Panc1 (cell line): ENCODE measurements at regions of chr3 and their contacts with region 1.

Region 1: DNA sequence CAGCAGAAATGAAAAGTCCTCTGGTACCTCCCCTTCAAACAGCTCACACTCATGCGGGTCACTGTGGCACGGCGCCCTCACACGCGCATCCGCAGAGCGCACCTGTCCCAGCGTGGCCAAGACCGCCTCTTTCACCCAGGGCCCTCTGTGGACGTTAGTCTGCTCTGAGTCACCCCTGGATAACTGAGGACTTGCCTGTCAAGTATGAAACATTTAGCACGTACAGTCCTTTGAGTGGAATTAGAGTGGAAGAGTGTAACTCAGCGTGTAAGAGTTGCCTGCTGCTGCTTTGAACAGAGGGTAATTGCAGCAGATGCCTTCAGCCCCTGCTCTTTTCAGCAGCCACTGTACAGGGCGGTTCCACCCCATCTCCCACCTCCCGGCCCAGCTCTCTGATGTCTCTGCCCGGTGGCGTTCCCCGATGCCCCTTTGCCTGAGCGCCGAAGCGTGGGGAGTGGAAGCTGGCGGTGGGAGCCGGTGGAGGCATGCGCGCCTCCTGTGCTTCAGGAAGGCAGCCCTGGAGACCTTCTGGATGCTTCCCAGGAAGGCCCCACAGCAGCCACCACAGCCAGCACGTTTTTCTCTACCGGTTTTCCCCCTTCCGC is 23.0 kb downstream of the CPN2 start:
- DNase-seq: no peak
- ATAC-seq: peak; percentile 40
- H3K4me3 ChIP-seq: no peak overlapping the region
- H3K27ac ChIP-seq: peak overlapping the region; percentile 3; the same call in 1 of the 2 replicates
- H3K4me1 ChIP-seq: peaks cover 5% of the 10 kb centered on the region; the same call in 1 of the 2 replicates
- H3K27me3 ChIP-seq: no peaks in the 10 kb centered on the region
- CTCF ChIP-seq: no peak

Region 2: DNA sequence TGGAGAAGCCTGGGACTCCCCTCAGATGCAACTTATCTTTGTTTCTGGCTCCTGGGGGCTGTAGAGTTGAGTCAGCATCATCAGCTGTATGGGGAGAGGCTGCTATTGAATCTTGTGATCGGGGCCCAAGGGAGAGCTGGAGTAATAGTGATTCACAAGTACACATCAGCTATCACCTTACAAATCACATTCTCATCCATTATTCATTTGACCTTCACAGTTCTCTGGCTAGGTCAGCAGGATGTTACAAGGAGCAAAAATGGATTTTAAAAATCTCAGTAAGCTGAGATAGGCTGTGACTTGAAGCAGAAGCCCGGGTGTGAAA is 560.1 kb before region 1 on chr3:
- CTCF ChIA-PET with region 1: no interaction called
- POLR2A ChIA-PET with region 1: interaction called, 11 read pairs
- in situ Hi-C with region 1: loop called (anchors 25 kb)
- intact Hi-C with region 1: no loop called
- DNase-seq: no peak
- ATAC-seq: no peak
- H3K4me3 ChIP-seq: no peak overlapping the region
- H3K27ac ChIP-seq: no peak overlapping the region
- H3K4me1 ChIP-seq: no peaks in the 10 kb centered on the region
- H3K27me3 ChIP-seq: no peaks in the 10 kb centered on the region
- CTCF ChIP-seq: no peak

Region 3: GRCh38 chr3:194306109-194306686 is 22.0 kb before region 1 on chr3:
- CTCF ChIA-PET with region 1: no interaction called
- POLR2A ChIA-PET with region 1: no interaction called
- in situ Hi-C with region 1: no loop called
- intact Hi-C with region 1: no loop called
- DNase-seq: no peak
- ATAC-seq: no peak; the same call in 1 of the 2 replicates
- H3K4me3 ChIP-seq: no peak overlapping the region
- H3K27ac ChIP-seq: no peak overlapping the region
- H3K4me1 ChIP-seq: no peaks in the 10 kb centered on the region; the same call in 1 of the 2 replicates
- H3K27me3 ChIP-seq: no peaks in the 10 kb centered on the region
- CTCF ChIP-seq: no peak